Natural killer cell (primary cell): ENCODE measurements at regions of chr17 and their contacts with region 1.

Region 1: GRCh38 chr17:16269658-16270057 is 52.6 kb downstream of the PIGL start:
- DNase-seq: no peak
- ATAC-seq: peak in 1 of 3 donors; percentile 42
- H3K4me3 ChIP-seq: no peak overlapping the region
- H3K4me3 Mint-ChIP-seq: peak overlapping the region; percentile 68
- H3K27ac ChIP-seq: no peak overlapping the region
- H3K27ac Mint-ChIP-seq: peak overlapping the region; percentile 47 to 65
- H3K4me1 ChIP-seq: peaks cover 21% of the 10 kb centered on the region
- H3K4me1 Mint-ChIP-seq: peaks cover 32 to 45% of the 10 kb centered on the region in 2 donors
- H3K27me3 ChIP-seq: no peaks in the 10 kb centered on the region
- H3K27me3 Mint-ChIP-seq: no peaks in the 10 kb centered on the region
- CTCF ChIP-seq: no peak

Region 2: GRCh38 chr17:16215273-16215964 is 54.2 kb before region 1 on chr17 and contains the start of gene NCOR1:
- intact Hi-C with region 1: loop called (anchors 5 kb)
- DNase-seq: peak; percentile 81 to 93
- ATAC-seq: peak; percentile 89 to 96 (median 91)
- H3K4me3 ChIP-seq: peak within 1 kb of the TSS; percentile 44
- H3K4me3 Mint-ChIP-seq: peak within 1 kb of the TSS; percentile 94
- H3K27ac ChIP-seq: peak within 1 kb of the TSS; percentile 57
- H3K27ac Mint-ChIP-seq: peak within 1 kb of the TSS; percentile 90 to 95
- H3K4me1 ChIP-seq: peaks cover 30% of the 10 kb centered on the region
- H3K4me1 Mint-ChIP-seq: peaks cover 37 to 38% of the 10 kb centered on the region in 2 donors
- H3K27me3 ChIP-seq: no peaks in the 10 kb centered on the region
- H3K27me3 Mint-ChIP-seq: no peaks in the 10 kb centered on the region
- CTCF ChIP-seq: peak; percentile 20
- total RNA-seq, gene NCOR1: 195 to 238 (median 238) TPM

Region 3: DNA sequence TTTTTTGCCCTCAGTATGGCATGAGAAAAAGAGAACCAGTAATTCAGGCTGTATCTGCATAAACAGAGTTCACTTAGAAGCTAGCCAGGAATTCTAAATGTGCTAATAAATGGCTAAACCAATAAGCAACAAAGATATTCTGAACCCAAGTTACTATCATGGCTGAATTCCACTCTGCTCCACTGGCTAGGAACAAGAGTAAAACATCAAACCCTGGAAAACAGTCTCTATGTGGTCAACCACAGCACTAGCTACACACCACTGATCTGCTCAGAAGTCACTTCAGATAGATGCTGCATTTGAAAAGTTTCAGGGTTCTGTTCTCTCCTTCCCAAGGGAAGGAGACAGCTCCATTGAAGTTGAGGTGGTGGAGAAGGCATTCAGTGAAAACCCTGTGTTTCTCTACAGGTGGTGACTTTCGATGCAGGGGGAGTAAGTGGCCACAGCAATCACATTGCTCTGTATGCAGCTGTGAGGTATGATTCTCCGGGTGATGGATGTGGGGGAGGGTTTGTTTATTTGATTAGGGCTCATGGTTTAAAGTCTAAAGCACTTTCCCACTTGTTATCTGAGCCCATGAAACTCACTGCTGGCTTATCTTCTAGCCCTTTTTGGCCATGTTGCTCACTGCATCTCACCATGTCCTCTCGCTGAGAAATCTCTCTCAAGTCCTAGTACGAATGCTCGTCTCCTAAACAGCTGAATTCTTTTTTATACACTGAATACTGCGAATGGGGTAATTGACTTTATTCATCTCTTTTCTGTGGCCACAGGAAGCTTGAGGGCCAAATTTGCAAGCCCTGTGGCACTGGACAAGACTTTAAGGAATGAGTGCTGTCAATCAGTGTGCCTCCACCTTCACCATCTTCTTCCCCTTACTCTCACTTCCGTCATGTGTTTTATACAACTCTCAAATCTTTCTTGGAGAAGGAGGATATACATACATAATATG is 43.8 kb after region 1 on chr17:
- intact Hi-C with region 1: no loop called
- DNase-seq: no peak
- ATAC-seq: no peak
- H3K4me3 ChIP-seq: no peak overlapping the region
- H3K4me3 Mint-ChIP-seq: no peak overlapping the region
- H3K27ac ChIP-seq: no peak overlapping the region
- H3K27ac Mint-ChIP-seq: no peak overlapping the region
- H3K4me1 ChIP-seq: peaks cover 6% of the 10 kb centered on the region
- H3K4me1 Mint-ChIP-seq: peaks cover 8 to 12% of the 10 kb centered on the region in 2 donors
- H3K27me3 ChIP-seq: no peaks in the 10 kb centered on the region
- H3K27me3 Mint-ChIP-seq: no peaks in the 10 kb centered on the region
- CTCF ChIP-seq: no peak